ENCODE measurements at regions of chr17 and their contacts with region 1.

Region 1: GRCh38 chr17:28357061-28357900 is at the start of gene POLDIP2:
- DNase-seq: peak; percentile 91 to 97 (median 96)
- ATAC-seq: peak; percentile 98
- H3K4me3 ChIP-seq: peak within 1 kb of the TSS; percentile 92 to 94
- H3K4me3 Mint-ChIP-seq: peak within 1 kb of the TSS; percentile 94
- H3K27ac ChIP-seq: peak within 1 kb of the TSS; percentile 82 to 93
- H3K27ac Mint-ChIP-seq: peak within 1 kb of the TSS; percentile 96
- H3K4me1 ChIP-seq: peaks cover 25% of the 10 kb centered on the region
- H3K4me1 Mint-ChIP-seq: peaks cover 30% of the 10 kb centered on the region
- H3K27me3 ChIP-seq: no peaks in the 10 kb centered on the region
- H3K27me3 Mint-ChIP-seq: no peaks in the 10 kb centered on the region
- CTCF ChIP-seq: no peak
- total RNA-seq, gene POLDIP2: 26.8 to 27.5 TPM

Region 2: DNA sequence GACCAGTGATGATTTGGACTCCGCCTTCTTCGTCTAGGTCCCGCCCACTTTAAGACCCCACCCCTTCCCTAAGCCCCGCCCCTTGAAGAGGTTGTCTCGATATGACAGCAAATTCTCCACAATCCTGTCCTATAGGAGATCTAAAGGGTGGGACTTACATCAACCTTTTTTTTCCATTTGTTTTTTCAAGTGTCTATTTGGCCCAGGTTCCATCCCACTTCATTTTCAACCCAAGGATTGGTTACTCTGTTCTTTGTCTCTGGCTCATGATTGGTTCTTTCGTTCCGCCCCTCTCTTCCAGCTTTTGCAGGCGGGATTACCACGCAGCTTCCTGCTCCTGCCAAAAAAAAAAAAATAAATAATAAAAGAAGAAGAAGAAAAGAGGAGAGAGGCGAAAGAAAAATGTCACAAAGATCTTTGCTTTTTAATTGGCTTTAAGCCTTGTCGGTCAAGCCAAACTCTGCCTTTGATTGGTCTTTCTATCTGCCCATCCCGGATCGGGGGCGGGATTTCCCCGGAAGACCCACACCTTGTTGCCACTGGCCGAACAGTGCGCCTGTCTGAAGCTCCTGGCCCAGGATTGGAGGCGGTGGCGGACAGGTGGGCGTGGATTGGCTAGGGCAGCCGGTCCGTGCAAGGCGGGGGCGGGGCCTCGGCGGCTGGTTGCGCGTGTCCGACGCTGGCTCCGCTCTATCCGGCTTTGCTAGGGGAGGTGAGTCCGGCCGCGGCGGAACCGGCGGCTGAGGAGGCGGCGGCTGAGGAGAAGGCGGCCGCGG is 316.0 kb before region 1 on chr17:
- CTCF ChIA-PET with region 1: no interaction called
- POLR2A ChIA-PET with region 1: interaction called, 4 read pairs
- intact Hi-C with region 1: loop called in 1 of 2 experiments (anchors 1 kb)
- DNase-seq: peak; percentile 97 to 100 (median 99)
- ATAC-seq: peak; percentile 91
- H3K4me3 ChIP-seq: peak overlapping the region; percentile 62 to 76
- H3K4me3 Mint-ChIP-seq: peak overlapping the region; percentile 87
- H3K27ac ChIP-seq: peak overlapping the region; percentile 24 to 77
- H3K27ac Mint-ChIP-seq: peak overlapping the region; percentile 89
- H3K4me1 ChIP-seq: peaks cover 27% of the 10 kb centered on the region
- H3K4me1 Mint-ChIP-seq: peaks cover 53% of the 10 kb centered on the region
- H3K27me3 ChIP-seq: no peaks in the 10 kb centered on the region
- H3K27me3 Mint-ChIP-seq: no peaks in the 10 kb centered on the region
- CTCF ChIP-seq: no peak

Region 3: DNA sequence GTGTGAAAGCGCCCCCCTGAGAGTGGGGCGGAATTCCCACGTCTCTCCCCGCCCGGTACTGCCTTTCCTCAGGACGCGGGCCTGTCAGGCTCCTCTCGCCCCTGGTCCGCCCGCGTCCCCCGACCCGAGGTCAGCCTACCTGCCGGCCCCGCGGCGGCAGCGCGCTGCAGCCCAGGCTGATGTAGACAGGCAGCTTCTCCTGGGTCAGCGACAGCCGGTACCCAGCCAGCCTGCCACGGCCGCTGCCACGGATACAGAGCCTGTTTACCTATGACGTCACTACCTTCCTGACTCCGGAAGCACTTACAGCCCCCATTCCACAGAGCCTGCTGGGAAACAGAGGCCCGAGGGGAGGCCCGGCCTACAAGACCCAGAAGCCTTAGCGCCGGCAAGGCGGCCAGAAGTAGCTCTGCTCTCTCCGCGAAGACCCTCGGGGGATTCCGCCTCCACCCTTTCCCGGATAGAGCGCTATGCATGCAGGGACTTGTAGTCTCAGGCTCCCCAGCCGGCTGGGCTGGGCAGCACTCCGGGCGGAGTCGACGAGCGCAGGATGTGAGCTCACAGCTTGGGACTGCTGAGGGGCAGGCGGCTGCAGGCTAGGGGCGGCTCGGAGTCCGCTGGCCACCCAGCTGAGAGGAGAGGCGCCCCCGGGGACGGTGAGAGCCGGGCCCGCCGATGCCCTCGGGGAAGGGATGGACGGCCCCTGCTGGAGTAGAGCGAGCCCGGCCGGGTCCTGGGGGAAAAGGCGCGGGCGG is 21.9 kb before region 1 on chr17 and contains the starts of genes IFT20 and TNFAIP1:
- CTCF ChIA-PET with region 1: interaction called, 9 read pairs
- POLR2A ChIA-PET with region 1: interaction called, 50 read pairs
- intact Hi-C with region 1: loop called (anchors 1 kb)
- DNase-seq: peak; percentile 94 to 100 (median 97)
- ATAC-seq: peak; percentile 96
- H3K4me3 ChIP-seq: peak within 1 kb of the TSS; percentile 80 to 95
- H3K4me3 Mint-ChIP-seq: peak within 1 kb of the TSS; percentile 99
- H3K27ac ChIP-seq: peak within 1 kb of the TSS; percentile 92 to 97
- H3K27ac Mint-ChIP-seq: peak within 1 kb of the TSS; percentile 97
- H3K4me1 ChIP-seq: peaks cover 22% of the 10 kb centered on the region
- H3K4me1 Mint-ChIP-seq: peaks cover 41% of the 10 kb centered on the region
- H3K27me3 ChIP-seq: no peaks in the 10 kb centered on the region
- H3K27me3 Mint-ChIP-seq: no peaks in the 10 kb centered on the region
- CTCF ChIP-seq: no peak
- total RNA-seq, gene IFT20: 32.5 to 34.6 TPM
- total RNA-seq, gene TNFAIP1: 15.3 to 15.5 TPM

Region 4: GRCh38 chr17:28384281-28385036 is 27.2 kb after region 1 on chr17:
- CTCF ChIA-PET with region 1: no interaction called
- POLR2A ChIA-PET with region 1: interaction called, 27 read pairs
- intact Hi-C with region 1: loop called in 1 of 2 experiments (anchors 1 kb)
- DNase-seq: peak; percentile 21 to 77 (median 65)
- ATAC-seq: peak; percentile 93
- H3K4me3 ChIP-seq: peak overlapping the region; percentile 75 to 83
- H3K4me3 Mint-ChIP-seq: peak overlapping the region; percentile 92
- H3K27ac ChIP-seq: peak overlapping the region; percentile 7 to 46
- H3K27ac Mint-ChIP-seq: peak overlapping the region; percentile 52
- H3K4me1 ChIP-seq: peaks cover 25% of the 10 kb centered on the region
- H3K4me1 Mint-ChIP-seq: peaks cover 27% of the 10 kb centered on the region
- H3K27me3 ChIP-seq: no peaks in the 10 kb centered on the region
- H3K27me3 Mint-ChIP-seq: peaks cover 6% of the 10 kb centered on the region
- CTCF ChIP-seq: no peak

Region 5: DNA sequence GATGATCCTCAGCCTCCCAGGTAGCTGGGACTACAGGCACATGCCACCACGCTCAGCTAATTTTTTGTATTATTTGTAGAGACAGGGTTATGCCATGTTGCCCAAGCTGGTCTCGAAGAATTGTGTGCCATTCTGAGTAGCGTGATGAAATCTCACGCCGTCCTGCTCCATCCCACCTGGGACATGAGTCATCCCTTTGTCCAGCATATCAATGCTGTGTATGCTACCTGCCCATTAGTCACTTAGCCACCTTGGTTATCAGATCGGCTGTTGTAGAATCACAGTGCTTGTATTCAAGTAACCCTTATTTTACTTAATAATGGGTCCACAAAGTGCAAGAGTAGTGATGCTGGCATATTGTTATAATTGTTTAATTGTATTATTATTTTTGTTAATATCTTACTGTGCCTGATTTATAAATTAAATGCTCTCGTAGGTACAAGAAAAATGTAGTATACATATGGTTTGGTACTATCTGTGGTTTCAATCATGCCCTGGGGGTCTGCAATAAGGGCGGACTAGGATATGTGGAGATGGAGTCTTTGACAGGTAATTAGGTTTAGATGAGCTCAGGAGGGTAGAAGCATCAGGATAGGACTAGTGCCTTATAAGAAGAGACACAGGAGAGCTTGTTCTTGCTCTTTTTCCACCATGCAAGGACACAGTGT is 89.6 kb after region 1 on chr17:
- CTCF ChIA-PET with region 1: no interaction called
- POLR2A ChIA-PET with region 1: no interaction called
- intact Hi-C with region 1: no loop called
- DNase-seq: no peak
- ATAC-seq: no peak
- H3K4me3 ChIP-seq: no peak overlapping the region
- H3K4me3 Mint-ChIP-seq: no peak overlapping the region
- H3K27ac ChIP-seq: no peak overlapping the region
- H3K27ac Mint-ChIP-seq: no peak overlapping the region
- H3K4me1 ChIP-seq: no peaks in the 10 kb centered on the region
- H3K4me1 Mint-ChIP-seq: no peaks in the 10 kb centered on the region
- H3K27me3 ChIP-seq: peaks cover 0 to 9% of the 10 kb centered on the region in 2 experiments
- H3K27me3 Mint-ChIP-seq: peaks cover 6% of the 10 kb centered on the region
- CTCF ChIP-seq: no peak

Region 6: DNA sequence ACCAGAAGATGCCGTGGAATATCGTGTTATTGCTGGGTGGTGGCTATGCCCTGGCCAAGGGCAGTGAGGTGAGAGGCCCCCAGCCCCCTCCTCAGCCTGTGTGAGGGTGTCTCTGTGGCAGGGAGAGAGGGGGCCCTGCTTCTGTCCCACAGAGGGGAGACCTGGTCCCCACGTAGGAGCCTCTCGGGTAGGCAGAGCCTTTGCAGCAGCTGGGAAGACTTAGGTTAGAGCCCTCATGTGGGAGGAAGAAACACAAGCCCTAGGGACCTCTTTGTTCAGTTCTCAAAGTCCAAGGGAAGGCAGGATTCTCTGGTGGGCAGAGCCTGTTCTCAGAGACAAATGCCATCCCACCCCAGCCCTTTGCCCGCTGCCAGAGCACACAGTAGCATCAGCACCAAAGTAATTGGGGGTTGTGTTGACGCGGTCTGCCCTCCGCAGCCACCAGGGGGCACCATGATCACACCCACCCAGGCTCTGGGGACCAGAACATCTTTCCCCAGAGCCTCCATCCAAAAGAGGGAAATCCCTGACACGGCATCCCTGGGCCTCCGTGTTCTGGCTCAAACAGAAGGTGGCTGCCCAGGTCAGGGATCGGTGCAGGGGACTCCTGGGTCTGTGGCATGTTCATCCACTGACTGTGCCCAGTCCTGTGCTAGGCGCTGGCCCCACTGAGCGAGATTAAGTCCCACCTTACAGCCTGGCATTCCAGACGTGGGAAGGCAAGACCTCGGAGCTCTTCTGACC is 137.3 kb after region 1 on chr17:
- CTCF ChIA-PET with region 1: no interaction called
- POLR2A ChIA-PET with region 1: no interaction called
- intact Hi-C with region 1: no loop called
- DNase-seq: peak; percentile 60 to 88 (median 79)
- ATAC-seq: peak; percentile 91
- H3K4me3 ChIP-seq: no peak overlapping the region
- H3K4me3 Mint-ChIP-seq: no peak overlapping the region
- H3K27ac ChIP-seq: no peak overlapping the region
- H3K27ac Mint-ChIP-seq: no peak overlapping the region
- H3K4me1 ChIP-seq: no peaks in the 10 kb centered on the region
- H3K4me1 Mint-ChIP-seq: no peaks in the 10 kb centered on the region
- H3K27me3 ChIP-seq: no peaks in the 10 kb centered on the region
- H3K27me3 Mint-ChIP-seq: peaks cover 4% of the 10 kb centered on the region
- CTCF ChIP-seq: peak; percentile 71

Region 7: DNA sequence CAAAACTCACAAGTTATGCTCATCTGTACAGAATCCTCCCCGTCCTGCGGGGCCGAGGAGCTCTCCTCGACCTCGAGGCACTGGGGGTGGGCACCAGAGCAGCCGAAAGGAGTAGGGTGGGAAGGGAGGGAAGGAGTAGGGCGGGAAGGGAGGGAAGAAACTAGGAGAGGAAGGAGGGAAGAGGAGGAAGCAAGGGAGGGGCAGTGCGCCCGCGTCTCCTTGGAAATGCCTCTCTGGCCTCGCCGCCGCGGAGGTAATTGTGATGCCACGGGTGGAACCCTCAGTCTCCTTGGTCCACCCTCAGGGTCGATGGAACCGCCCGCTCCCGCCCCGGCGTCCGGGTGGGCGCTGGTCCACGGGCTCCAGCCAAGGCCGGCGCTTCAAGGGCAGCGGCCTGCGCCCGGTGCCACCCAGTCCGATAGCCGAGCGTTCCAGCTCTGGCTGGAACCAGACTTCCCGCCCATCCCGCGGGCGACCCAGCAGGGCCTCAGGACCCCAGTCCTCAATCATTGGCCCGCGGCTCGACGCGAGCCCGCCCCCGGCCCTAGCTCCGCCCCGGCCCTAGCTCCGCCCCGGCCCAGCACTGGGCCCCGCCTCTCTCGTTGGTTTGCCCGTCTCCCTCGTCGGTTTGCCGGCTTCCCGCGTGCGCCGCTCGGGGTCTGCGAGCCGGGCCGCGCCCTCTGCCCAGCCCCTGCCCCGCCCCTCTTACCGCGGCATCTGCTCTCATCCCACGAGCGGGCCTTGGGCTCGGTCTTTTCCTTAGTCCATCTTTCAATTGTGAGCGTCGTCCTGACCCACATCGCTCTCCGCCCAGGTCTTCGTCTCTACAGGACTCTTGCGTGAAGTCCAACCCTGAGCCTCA is 353.8 kb after region 1 on chr17:
- CTCF ChIA-PET with region 1: no interaction called
- POLR2A ChIA-PET with region 1: interaction called, 3 read pairs
- intact Hi-C with region 1: loop called in 1 of 2 experiments (anchors 2 kb)
- DNase-seq: peak; percentile 77 to 90 (median 89)
- ATAC-seq: peak; percentile 92
- H3K4me3 ChIP-seq: peak overlapping the region; percentile 66 to 89
- H3K4me3 Mint-ChIP-seq: peak overlapping the region; percentile 89
- H3K27ac ChIP-seq: peak overlapping the region; percentile 69 to 76
- H3K27ac Mint-ChIP-seq: peak overlapping the region; percentile 91
- H3K4me1 ChIP-seq: peaks cover 16% of the 10 kb centered on the region
- H3K4me1 Mint-ChIP-seq: peaks cover 17% of the 10 kb centered on the region
- H3K27me3 ChIP-seq: no peaks in the 10 kb centered on the region
- H3K27me3 Mint-ChIP-seq: peaks cover 14% of the 10 kb centered on the region
- CTCF ChIP-seq: no peak